Activated naive CD4-positive, alpha-beta T cell treated with anti-CD3 and anti-CD28 coated beads for 36 hours (primary cell): ENCODE measurements at regions of chr12 and their contacts with region 1.

Region 1: DNA sequence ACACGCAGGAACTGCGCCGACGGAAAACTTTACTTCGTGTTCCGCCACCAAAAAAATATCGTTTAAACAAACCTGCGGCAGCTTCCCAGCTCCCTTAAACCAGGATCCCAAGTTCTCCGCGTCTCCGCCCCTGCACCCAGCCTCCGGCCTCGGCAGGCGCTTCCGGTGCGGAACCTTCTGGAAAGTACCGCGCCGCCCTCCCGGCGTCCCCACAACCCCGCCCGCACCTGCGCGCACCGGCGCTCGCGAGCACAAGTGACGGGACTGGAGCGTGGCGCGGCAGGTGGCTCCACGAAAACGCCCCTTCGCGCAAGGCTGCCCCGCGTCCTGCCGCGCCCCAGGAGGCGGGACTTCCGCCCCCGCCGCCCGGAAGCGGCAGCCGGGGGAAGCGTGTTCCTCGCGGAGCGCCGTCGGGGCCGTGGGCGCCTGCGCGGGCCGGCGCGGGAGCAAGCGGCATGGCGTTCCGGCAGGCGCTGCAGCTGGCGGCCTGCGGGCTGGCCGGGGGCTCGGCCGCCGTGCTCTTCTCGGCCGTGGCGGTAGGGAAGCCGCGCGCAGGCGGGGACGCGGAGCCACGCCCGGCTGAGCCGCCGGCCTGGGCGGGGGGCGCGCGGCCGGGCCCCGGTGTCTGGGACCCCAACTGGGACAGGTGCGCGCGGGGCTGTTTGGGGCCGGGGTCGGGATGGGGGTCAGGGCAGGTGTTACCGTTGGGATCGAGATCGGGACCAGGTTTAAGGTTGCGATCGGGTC is at the start of gene PGAM5:
- DNase-seq: peak; percentile 86
- H3K4me3 Mint-ChIP-seq: peak within 1 kb of the TSS; percentile 85
- H3K27ac Mint-ChIP-seq: peak within 1 kb of the TSS; percentile 66
- H3K4me1 Mint-ChIP-seq: peaks cover 27% of the 10 kb centered on the region
- H3K27me3 Mint-ChIP-seq: no peaks in the 10 kb centered on the region
- total RNA-seq, gene PGAM5: 50.1 to 55.7 TPM

Region 2: DNA sequence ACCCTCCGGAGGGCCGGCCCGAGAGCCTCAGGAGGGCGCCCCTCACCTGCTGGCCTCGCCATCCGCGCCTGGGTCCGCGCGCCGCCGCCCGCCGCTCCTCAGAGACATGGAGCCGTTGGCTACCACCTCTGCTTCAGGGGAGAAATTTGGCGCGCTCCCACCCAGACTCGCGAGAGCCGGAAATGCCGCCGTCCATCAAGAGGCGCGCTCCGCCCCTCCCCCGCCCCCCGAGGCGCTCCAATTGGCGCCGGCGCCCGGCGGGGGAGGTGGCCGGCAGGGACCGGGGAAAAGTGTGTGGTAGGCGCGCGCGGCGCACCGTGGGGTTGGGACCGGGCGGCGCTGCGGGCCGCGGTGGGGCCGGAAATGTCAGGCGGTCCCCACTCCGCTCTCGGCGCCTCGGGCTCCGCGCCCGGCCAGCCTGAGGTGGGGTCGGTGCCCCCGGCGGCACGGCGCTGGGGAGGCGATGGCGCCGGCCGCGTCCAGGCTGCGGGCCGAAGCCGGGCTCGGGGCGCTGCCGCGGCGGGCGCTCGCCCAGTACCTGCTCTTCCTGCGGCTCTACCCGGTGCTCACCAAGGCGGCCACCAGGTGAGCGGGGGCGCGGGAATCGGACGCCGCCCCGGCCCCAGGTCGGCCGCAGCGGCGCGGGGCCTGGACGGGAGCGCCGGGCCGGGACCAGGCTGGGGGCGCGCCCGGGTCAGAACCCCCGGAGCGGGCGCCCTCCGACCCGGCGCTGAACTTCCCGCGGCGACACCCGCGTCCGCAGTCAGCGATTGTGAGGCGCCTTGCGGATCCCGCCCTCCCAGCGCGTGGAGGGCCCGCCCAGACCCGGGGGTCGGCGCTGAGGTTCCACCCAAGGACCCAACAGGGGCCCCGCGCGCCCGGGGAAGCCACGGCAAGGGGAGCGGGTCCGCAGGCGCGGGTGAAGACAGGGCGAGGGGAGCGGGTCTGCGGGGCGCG is 23.1 kb before region 1 on chr12 and contains the starts of genes POLE and PXMP2:
- CTCF ChIA-PET with region 1: no interaction called
- intact Hi-C with region 1: loop called (anchors 1 kb)
- DNase-seq: peak; percentile 96
- H3K4me3 Mint-ChIP-seq: peak within 1 kb of the TSS; percentile 79
- H3K27ac Mint-ChIP-seq: peak within 1 kb of the TSS; percentile 66
- H3K4me1 Mint-ChIP-seq: peaks cover 23% of the 10 kb centered on the region
- H3K27me3 Mint-ChIP-seq: no peaks in the 10 kb centered on the region
- total RNA-seq, gene POLE: 118 to 121 TPM
- total RNA-seq, gene PXMP2: 11.3 to 12.8 TPM

Region 3: DNA sequence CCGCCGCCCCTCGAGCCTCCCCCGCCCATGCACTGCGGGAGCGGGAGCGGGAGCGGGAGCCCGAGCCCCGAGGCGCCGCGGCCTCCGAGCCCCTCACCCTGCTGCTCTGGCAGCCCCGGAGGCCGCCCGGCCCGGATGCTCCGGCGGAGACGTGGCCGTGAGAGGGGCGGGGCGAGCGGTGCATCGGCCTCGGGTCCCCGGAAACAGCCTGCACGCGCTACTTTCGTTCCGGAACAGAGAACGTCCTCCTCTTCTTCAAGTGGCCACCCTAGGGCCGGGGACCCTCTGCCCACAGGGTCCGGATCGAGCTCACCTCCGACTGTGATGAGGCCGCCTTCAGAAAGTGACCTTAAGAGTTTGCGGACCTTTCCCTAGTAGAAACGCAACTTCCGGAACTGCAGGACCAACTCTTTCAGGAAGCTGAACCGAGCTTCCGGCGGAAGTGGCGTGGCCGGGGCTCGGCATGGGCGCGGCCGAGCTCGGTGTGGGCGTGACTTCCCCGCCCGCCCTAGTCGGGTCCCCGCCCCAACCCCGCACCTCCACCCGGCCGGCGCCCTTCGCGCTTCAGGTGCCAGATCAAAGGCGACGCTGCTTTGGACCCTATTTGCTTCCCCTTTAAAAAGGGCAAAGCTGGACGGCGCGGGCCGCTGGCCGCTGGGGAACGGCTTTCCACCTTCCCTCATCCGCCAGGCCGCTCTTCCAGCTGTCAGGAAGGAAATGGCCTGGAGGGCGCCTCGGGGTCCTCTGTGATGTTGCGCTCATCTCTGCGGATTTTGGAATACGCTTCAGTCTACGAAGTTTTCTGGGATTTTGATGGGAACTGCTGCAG is 118.3 kb after region 1 on chr12 and contains the start of gene GOLGA3:
- CTCF ChIA-PET with region 1: no interaction called
- intact Hi-C with region 1: loop called (anchors 5 kb)
- DNase-seq: peak; percentile 95
- H3K4me3 Mint-ChIP-seq: peak within 1 kb of the TSS; percentile 98
- H3K27ac Mint-ChIP-seq: peak within 1 kb of the TSS; percentile 100
- H3K4me1 Mint-ChIP-seq: peaks cover 49% of the 10 kb centered on the region
- H3K27me3 Mint-ChIP-seq: no peaks in the 10 kb centered on the region
- total RNA-seq, gene GOLGA3: 25.2 to 29.1 TPM

Region 4: DNA sequence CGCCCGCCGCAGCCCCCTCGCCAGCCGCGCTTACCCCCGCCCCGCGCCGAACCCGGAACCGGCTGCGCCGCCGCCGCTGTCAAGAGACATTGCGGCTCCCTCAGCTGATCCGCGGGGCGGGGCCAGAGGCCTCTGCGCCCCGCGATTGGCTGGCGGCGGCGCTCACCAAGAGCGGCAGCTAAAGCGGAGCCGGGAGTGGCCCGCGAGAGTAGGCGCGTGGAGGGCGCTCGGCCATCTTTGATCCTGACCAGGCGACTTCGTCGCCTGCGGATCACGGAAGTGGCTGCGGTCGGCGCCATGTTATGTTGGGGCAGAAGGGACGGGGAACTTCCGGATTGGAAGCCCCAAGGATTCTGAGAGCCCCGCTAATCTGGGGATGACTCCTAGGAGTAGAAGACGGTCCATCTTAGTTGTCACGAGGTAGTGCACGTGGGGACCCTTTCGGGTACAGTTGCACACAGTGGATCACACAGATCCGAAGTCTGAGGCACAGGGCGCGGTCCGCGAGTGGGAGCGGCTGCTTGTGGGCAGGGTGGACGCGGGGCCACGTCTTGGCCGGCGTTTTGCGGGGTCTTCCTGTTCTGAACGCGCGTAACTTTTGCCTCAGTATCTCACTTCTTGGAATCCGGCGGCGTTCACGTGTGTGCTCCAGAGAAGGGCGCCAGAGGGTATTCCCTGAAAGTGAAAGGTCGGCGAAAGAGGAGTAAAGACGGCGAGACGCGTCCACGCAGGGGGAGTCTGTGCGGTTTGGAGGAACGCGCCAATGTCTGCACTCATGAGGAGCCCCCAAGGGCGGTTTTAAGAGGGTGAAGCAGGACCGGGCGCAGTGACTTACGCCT is 177.1 kb after region 1 on chr12 and contains the start of gene CHFR:
- CTCF ChIA-PET with region 1: no interaction called
- intact Hi-C with region 1: loop called (anchors 2 kb)
- DNase-seq: peak; percentile 97
- H3K4me3 Mint-ChIP-seq: peak within 1 kb of the TSS; percentile 98
- H3K27ac Mint-ChIP-seq: peak within 1 kb of the TSS; percentile 99
- H3K4me1 Mint-ChIP-seq: peaks cover 32% of the 10 kb centered on the region
- H3K27me3 Mint-ChIP-seq: no peaks in the 10 kb centered on the region
- total RNA-seq, gene CHFR: 27.2 to 32.8 TPM

Region 5: GRCh38 chr12:132986001-132986912 is 275.7 kb after region 1 on chr12 and contains the start of gene ZNF26:
- CTCF ChIA-PET with region 1: no interaction called
- intact Hi-C with region 1: loop called (anchors 1 kb)
- DNase-seq: peak; percentile 92
- H3K4me3 Mint-ChIP-seq: peak within 1 kb of the TSS; percentile 91
- H3K27ac Mint-ChIP-seq: peak within 1 kb of the TSS; percentile 90
- H3K4me1 Mint-ChIP-seq: peaks cover 24% of the 10 kb centered on the region
- H3K27me3 Mint-ChIP-seq: peaks cover 4% of the 10 kb centered on the region
- total RNA-seq, gene ZNF26: 8.4 to 12.2 TPM